Dorsolateral prefrontal cortex (tissue), 120 donors: ENCODE measurements at regions of chr20 and their contacts with region 1.

Region 1: GRCh38 chr20:44457016-44457415 is 18.7 kb upstream of the TTPAL start:
- DNase-seq: no peak
- H3K4me3 ChIP-seq: no peak overlapping the region
- H3K27ac ChIP-seq: no peak overlapping the region
- H3K27me3 ChIP-seq: no peaks in the 10 kb centered on the region
- CTCF ChIP-seq: no peak

Region 2: DNA sequence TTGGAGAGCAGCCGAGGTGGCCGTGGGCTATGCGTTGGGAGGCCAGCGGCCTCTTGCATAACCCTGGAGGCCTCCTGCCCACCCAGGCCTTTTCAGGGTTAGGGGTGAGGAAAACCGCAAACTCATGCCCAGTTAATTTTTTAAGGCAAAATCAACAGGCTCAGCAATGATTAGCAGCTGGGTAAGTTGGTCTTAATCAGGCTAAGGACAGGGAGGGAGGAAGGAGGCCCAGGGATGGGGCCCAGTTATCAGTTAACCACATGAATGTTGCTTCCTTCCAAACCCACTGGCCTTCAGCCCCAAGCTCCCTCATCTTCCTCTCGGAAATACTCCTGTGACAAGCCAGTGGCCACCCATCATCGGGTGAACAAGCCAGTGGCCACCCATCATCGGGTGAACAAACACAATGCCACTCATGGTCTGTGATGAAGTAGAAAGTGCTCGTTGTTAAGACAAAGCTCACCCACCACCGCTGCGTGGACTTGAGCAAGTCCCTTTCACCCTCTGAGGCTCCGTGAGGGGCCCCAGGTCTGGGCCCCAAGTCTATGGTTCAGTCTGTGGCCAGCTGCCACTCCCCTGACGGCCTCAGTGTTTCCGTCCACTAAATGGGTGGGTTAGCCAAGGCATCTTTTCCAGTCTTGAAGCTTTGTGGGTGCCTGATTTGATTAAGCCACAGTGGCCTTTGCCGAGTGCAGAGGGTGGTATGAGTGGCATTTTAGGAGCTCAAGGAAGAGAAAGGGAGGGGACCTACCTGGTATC is 62.1 kb before region 1 on chr20:
- intact Hi-C with region 1: loop called (anchors 5 to 10 kb)
- DNase-seq: no peak
- H3K4me3 ChIP-seq: no peak overlapping the region
- H3K27ac ChIP-seq: no peak overlapping the region
- H3K27me3 ChIP-seq: no peaks in the 10 kb centered on the region
- CTCF ChIP-seq: no peak

Region 3: GRCh38 chr20:44407402-44408184 is 49.4 kb before region 1 on chr20:
- intact Hi-C with region 1: loop called in 1 of 2 experiments (anchors 10 kb)
- DNase-seq: no peak
- H3K4me3 ChIP-seq: no peak overlapping the region
- H3K27ac ChIP-seq: no peak overlapping the region
- H3K27me3 ChIP-seq: peaks cover 0 to 5% (median 0%) of the 10 kb centered on the region in 45 donors
- CTCF ChIP-seq: no peak

Region 4: DNA sequence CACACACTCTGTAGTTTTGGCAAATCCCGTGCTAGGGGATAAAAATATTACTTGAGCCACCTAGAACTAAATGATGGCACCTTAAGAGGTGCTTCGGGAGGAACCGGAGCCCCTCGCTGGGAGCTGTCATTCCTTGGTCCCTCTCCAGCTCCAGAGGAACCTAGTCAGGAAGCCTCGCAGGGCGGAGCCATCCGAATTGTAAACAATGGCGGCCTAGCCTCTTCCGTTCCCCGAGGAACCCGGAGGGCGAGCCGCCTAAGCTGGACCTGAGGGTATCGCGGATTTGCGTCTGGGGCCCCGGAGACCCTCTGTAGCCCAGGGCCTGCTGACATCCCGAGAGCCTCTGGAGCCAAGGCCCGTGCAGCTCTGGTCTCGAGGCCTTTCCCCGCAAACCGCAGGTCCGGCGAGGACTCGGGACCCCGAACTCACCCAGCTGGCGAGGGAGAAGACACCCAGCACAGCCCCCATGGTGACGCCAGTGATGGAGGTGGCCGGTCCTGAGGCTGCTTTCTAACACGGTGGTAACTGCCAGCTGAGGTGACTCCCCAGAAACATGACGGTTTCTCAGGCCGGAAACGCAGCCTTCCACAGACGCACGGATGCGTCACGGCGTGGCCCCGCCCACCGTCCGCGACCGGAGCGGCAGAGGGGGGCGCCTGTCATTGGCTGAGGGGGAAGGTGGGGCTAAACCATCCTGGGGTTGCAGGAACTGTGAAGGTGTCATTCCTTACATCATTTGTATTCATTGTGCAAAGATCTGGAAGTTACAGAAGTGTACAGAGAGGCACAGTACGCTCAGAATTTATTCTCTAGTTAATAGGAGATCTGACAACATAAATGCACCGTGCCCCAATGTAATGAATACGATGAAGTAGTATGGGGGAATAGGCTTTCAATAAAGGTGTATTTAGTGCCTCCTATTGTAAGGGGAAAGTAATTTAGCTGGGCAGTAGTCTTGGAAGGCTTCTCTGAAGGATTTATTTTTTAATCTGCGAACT is 64.8 kb after region 1 on chr20 and contains the start of gene SERINC3:
- intact Hi-C with region 1: no loop called
- DNase-seq: peak; percentile 87 to 98 (median 96)
- H3K4me3 ChIP-seq: peak within 1 kb of the TSS; percentile 60 to 100 (median 96)
- H3K27ac ChIP-seq: peak within 1 kb of the TSS; percentile 78 to 100 (median 96)
- H3K27me3 ChIP-seq: no peaks in the 10 kb centered on the region
- CTCF ChIP-seq: peak in 29 of 56 donors; percentile 2 to 61 (median 29)
- total RNA-seq, gene SERINC3: 107 to 236 (median 191) TPM

Region 5: GRCh38 chr20:44576297-44576696 is 119.3 kb after region 1 on chr20:
- intact Hi-C with region 1: no loop called
- DNase-seq: no peak
- H3K4me3 ChIP-seq: no peak overlapping the region
- H3K27ac ChIP-seq: peak overlapping the region in 20 of 59 donors; percentile 1 to 71 (median 24)
- H3K27me3 ChIP-seq: no peaks in the 10 kb centered on the region
- CTCF ChIP-seq: peak in 4 of 56 donors; percentile 8 to 14 (median 10)